Activated CD4-positive, alpha-beta T cell treated with anti-CD3 and anti-CD28 coated beads for 36 hours (primary cell): ENCODE measurements at regions of chr1 and their contacts with region 1.

Region 1: GRCh38 chr1:35715568-35716002 is 3.1 kb downstream of the C1orf216 start:
- DNase-seq: peak; percentile 90
- ATAC-seq: peak; percentile 61
- H3K4me3 Mint-ChIP-seq: peak overlapping the region; percentile 37
- H3K27ac Mint-ChIP-seq: no peak overlapping the region
- H3K4me1 Mint-ChIP-seq: peaks cover 31% of the 10 kb centered on the region
- H3K27me3 Mint-ChIP-seq: no peaks in the 10 kb centered on the region

Region 2: GRCh38 chr1:35577071-35577998 is 138.2 kb before region 1 on chr1:
- CTCF ChIA-PET with region 1: interaction called, 9 read pairs
- POLR2A ChIA-PET with region 1: no interaction called
- intact Hi-C with region 1: loop called in 1 of 2 experiments (anchors 2 kb)
- DNase-seq: peak; percentile 74
- ATAC-seq: peak; percentile 83
- H3K4me3 Mint-ChIP-seq: peak overlapping the region; percentile 63
- H3K27ac Mint-ChIP-seq: peak overlapping the region; percentile 80
- H3K4me1 Mint-ChIP-seq: peaks cover 20% of the 10 kb centered on the region
- H3K27me3 Mint-ChIP-seq: peaks cover 12% of the 10 kb centered on the region

Region 3: GRCh38 chr1:35702508-35702907 is 13.1 kb before region 1 on chr1:
- CTCF ChIA-PET with region 1: interaction called, 11 read pairs
- POLR2A ChIA-PET with region 1: no interaction called
- intact Hi-C with region 1: no loop called
- DNase-seq: no peak
- ATAC-seq: no peak
- H3K4me3 Mint-ChIP-seq: no peak overlapping the region
- H3K27ac Mint-ChIP-seq: no peak overlapping the region
- H3K4me1 Mint-ChIP-seq: peaks cover 12% of the 10 kb centered on the region
- H3K27me3 Mint-ChIP-seq: peaks cover 43% of the 10 kb centered on the region